CD4-positive, alpha-beta memory T cell (primary cell): ENCODE measurements at regions of chr17 and their contacts with region 1.

Region 1: DNA sequence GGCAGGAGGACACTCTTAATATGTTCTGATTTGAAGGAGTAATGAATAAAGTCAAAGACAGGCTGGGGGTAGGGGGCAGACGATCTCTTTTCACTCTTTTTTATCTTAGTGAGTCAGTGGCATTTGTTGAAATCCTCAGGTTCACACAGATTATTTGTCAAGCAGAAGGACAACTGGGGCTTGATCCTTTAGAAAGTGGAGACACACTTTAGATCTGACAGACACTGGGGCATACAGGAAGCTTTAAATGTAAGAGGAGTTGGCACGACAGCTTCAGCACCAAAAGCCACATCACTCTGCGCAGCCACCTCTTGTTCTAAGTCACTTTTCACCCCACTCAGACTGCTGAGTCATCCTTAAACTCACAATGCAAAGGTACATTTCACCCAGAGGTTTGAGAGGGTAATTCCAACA is 121.5 kb downstream of the STXBP4 start:
- DNase-seq: peak; percentile 51 to 68 (median 63)
- H3K4me3 ChIP-seq: no peak overlapping the region
- H3K4me3 Mint-ChIP-seq: peak overlapping the region in 7 of 8 donors; percentile 3 to 65 (median 54)
- H3K27ac ChIP-seq: peak overlapping the region; percentile 42
- H3K27ac Mint-ChIP-seq: peak overlapping the region; percentile 81 to 95 (median 91)
- H3K4me1 ChIP-seq: peaks cover 64% of the 10 kb centered on the region
- H3K4me1 Mint-ChIP-seq: peaks cover 31 to 51% (median 42%) of the 10 kb centered on the region in 4 donors
- H3K27me3 ChIP-seq: no peaks in the 10 kb centered on the region
- H3K27me3 Mint-ChIP-seq: no peaks in the 10 kb centered on the region

Region 2: GRCh38 chr17:55072898-55073297 is 17.2 kb before region 1 on chr17:
- CTCF ChIA-PET with region 1: interaction called, 6 read pairs
- POLR2A ChIA-PET with region 1: interaction called, 60 read pairs
- intact Hi-C with region 1: loop called (anchors 1 kb)
- DNase-seq: peak; percentile 62 to 79 (median 67)
- H3K4me3 ChIP-seq: no peak overlapping the region
- H3K4me3 Mint-ChIP-seq: peak overlapping the region; percentile 0 to 76 (median 62)
- H3K27ac ChIP-seq: peak overlapping the region; percentile 70
- H3K27ac Mint-ChIP-seq: peak overlapping the region; percentile 88 to 99 (median 97)
- H3K4me1 ChIP-seq: peaks cover 37% of the 10 kb centered on the region
- H3K4me1 Mint-ChIP-seq: peaks cover 17 to 40% (median 26%) of the 10 kb centered on the region in 4 donors
- H3K27me3 ChIP-seq: no peaks in the 10 kb centered on the region
- H3K27me3 Mint-ChIP-seq: no peaks in the 10 kb centered on the region

Region 3: DNA sequence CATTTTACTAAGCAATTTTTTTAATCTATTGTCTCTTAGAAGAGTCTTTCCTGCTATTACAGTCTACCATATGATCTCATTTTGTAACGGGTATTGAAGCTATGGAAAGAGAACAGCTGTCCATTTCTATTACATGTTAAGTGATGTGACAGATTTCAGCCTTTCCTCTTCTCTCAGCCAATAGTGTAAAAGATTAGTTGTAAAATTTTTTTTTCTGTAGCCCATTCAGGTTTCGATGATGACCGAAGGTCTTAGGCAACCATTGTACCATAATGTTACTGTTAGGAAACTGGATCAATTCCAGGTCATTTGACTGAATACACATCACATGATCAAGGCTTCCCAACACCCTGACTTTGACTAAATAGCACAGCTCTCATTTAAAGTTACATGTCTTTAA is 27.1 kb after region 1 on chr17:
- CTCF ChIA-PET with region 1: interaction called, 3 read pairs
- POLR2A ChIA-PET with region 1: interaction called, 14 read pairs
- intact Hi-C with region 1: loop called (anchors 2 kb)
- DNase-seq: no peak
- H3K4me3 ChIP-seq: no peak overlapping the region
- H3K4me3 Mint-ChIP-seq: peak overlapping the region in 1 of 8 donors; percentile 19
- H3K27ac ChIP-seq: no peak overlapping the region
- H3K27ac Mint-ChIP-seq: peak overlapping the region in 4 of 7 donors; percentile 3 to 87 (median 67)
- H3K4me1 ChIP-seq: peaks cover 22% of the 10 kb centered on the region
- H3K4me1 Mint-ChIP-seq: peaks cover 10 to 31% (median 22%) of the 10 kb centered on the region in 4 donors
- H3K27me3 ChIP-seq: no peaks in the 10 kb centered on the region
- H3K27me3 Mint-ChIP-seq: no peaks in the 10 kb centered on the region